ENCODE measurements at regions of chr1 and their contacts with region 1.

Region 1: DNA sequence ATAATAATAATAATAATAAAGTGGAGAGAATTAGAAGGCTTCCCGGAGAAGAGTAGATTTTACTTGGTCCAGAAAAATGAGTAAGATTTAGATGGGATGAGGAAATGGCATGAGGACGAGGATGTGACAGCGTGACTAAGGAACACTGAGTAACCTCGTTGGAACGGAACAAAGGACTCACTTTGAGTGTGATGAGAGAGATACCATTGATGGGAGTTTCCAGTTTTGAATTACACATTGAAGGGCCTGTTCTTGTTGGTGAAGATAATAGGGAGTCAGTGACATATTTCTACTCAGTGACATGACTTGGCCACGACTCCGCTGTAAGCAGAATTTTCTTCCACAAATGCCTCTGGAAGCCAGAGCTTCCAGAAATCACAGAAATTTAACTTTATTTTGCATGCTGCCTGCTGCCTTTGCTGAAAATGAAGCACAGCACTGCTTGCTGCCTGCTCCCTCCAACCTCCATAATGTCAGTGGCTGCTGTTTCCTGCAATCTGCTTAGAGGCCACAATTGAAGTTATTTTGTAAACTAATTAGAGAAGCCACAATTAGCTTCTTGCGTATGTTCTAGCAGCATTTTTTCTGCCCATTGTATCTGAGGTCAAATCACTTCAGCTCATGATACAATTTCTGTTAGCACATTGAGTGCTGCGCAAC is 33.7 kb upstream of the FBXO28 start:
- DNase-seq: peak; percentile 55 to 93
- H3K4me3 ChIP-seq: peak overlapping the region; percentile 23; the same call in 1 of the 2 replicates
- H3K27ac ChIP-seq: peak overlapping the region; percentile 97
- H3K4me1 ChIP-seq: peaks cover 29% of the 10 kb centered on the region
- H3K27me3 ChIP-seq: no peaks in the 10 kb centered on the region
- CTCF ChIP-seq: no peak

Region 2: DNA sequence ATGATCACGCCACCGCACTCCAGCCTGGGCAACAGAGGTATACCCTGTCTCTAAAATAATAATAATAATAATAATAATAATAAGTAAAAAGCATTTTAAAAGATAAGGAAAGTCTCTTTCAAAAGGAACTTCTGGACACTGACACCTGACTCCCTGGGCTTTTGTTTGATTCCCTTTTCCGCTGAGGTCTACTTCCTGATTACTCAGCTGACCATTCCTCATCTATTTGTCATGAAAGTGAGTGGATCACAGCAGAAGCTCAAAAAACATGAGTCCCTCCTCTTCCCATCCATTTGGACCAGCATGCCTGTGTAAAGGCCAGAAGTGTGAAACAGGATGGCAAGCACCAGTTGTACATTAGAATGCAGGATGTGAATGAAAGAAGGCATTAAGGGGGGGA is 27.5 kb before region 1 on chr1:
- CTCF ChIA-PET with region 1: no interaction called
- POLR2A ChIA-PET with region 1: no interaction called
- intact Hi-C with region 1: loop called (anchors 2 kb)
- DNase-seq: peak in 1 of 2 experiments; percentile 76
- H3K4me3 ChIP-seq: no peak overlapping the region
- H3K27ac ChIP-seq: peak overlapping the region; percentile 42
- H3K4me1 ChIP-seq: peaks cover 33% of the 10 kb centered on the region
- H3K27me3 ChIP-seq: no peaks in the 10 kb centered on the region
- CTCF ChIP-seq: no peak

Region 3: DNA sequence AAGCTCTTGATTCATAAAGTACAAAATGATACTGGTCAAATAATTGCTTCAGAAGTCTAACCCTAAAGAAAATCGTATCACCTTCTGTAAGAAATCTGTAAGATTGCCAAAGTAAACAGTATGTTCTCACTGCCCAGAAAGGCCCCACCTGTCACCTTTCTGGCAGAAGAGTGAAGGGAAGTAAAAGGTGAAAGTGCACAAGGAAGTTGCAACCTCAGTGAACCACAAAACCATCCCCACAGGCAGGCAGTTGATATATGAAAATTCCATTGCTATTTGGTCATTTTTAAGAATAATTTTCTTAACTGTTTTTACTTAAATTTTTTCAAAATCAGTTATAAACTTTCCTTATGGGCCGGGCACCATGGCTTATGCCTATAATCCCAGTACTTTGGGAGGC is 14.8 kb before region 1 on chr1:
- CTCF ChIA-PET with region 1: no interaction called
- POLR2A ChIA-PET with region 1: no interaction called
- intact Hi-C with region 1: loop called (anchors 1 kb)
- DNase-seq: peak; percentile 65 to 95
- H3K4me3 ChIP-seq: no peak overlapping the region
- H3K27ac ChIP-seq: peak overlapping the region; percentile 82
- H3K4me1 ChIP-seq: peaks cover 57% of the 10 kb centered on the region
- H3K27me3 ChIP-seq: no peaks in the 10 kb centered on the region
- CTCF ChIP-seq: no peak

Region 4: DNA sequence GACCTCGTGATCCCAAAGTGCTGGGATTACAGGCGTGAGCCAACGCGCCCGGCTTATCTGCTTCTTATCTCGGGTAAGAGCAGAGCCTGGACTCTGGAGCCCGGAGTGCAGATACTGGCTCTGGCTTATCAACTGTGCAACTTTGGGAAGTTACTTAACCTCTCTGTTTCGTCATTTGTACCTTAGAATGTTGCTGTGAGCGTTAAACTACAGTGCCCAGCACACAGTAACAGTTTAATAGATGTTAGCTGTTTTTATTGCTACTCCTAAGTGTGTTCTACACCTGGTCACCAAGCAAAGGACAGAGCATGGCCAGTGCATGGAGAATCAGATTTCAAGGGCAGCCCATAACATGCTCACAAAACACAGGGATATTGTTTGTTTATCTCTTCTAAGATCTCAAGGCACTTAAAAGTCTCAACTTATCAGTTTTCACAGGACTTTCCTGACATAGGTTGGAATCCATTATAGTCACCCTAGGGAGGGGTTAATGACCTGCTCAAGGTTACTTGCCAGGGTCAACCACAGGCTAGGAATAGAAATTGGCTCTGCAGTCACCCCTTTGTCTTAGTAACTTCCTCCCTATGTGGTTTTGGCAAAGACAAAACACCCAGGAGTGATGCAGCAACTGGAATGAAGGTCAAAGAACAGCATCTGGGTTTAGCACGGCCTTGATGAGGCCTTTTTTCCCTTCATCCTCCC is 1674.8 kb after region 1 on chr1:
- CTCF ChIA-PET with region 1: interaction called, 15 read pairs
- POLR2A ChIA-PET with region 1: no interaction called
- intact Hi-C with region 1: no loop called
- DNase-seq: peak; percentile 63 to 83
- H3K4me3 ChIP-seq: no peak overlapping the region
- H3K27ac ChIP-seq: peak overlapping the region; percentile 48
- H3K4me1 ChIP-seq: peaks cover 30% of the 10 kb centered on the region
- H3K27me3 ChIP-seq: no peaks in the 10 kb centered on the region
- CTCF ChIP-seq: no peak

Measured in PC-9 (cell line).